Gastrocnemius medialis (tissue), 4 donors: ENCODE measurements at regions of chr3 and their contacts with region 1.

Region 1: DNA sequence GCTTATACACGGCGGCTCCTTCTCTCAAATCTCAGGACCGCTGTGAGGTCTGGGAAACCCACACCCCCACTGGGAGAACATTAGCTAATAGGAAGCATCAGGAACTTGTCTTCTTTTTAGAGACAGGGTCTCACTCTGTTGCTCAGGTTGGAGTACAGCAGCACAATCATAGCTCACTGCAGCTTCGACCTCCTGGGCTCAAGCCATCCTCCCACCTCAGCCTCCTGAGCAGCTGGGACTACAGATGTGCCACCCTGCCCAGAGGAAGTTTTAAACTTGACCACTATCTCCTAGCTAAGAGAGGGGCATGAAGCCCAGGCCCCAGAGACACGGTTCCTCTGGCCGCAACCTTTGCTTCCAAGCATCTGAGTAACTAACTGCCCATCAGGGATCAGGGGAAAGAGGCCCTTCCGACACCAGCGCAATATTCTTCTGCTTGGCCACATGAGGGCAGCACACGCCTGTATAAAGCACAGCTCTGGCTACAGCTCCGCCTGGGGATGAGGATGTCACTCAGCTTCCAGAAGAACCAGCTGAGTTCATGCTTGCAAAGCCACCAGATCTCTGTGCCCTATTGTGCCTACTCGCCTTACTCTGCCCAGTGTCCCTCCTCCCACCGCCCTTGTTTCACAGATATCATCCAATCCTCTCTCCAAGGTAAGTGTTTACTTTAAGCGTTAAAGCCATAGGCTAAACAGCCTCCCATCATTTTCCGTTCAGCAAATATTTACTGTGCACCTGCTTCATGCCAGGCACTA is 57.5 kb upstream of the SLC6A11 start:
- DNase-seq: no peak
- ATAC-seq: peak; percentile 79 to 89
- H3K4me3 ChIP-seq: no peak overlapping the region
- H3K27ac ChIP-seq: no peak overlapping the region
- H3K4me1 ChIP-seq: no peaks in the 10 kb centered on the region
- H3K27me3 ChIP-seq: peaks cover 4 to 6% (median 5%) of the 10 kb centered on the region in 3 donors
- CTCF ChIP-seq: peak; percentile 32 to 67 (median 53)
- POLR2A ChIP-seq: no peak

Region 2: DNA sequence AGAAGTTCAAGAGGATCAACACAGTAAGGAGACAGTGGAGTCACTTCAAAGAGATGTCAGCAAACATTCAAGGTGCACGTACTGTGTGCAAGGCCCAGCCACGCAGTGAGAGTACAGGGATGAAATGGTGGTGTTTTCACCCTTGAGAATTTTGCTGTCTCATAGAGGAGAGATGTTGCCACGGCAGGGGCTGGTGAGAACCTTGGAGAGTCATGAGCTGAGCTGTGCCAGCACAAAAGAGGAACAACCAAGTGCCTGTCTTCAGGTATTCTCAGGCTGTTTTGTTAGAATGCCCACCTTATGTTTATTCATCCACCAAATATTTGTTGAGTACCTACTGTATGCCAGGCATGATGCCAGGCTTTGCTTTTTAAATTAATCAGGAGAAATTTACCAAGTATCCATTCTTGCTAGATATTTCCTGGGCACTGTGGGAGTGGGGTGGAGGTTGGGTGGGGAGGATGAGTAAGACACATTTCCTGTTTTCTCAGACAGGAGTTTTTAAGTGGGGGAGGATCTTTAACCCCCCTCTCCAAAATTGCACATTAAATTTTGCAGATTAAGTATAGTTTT is 130.1 kb after region 1 on chr3:
- in situ Hi-C with region 1: loop called in 1 of 4 experiments (anchors 5 kb)
- intact Hi-C with region 1: no loop called
- DNase-seq: no peak
- ATAC-seq: no peak
- H3K4me3 ChIP-seq: no peak overlapping the region
- H3K27ac ChIP-seq: no peak overlapping the region
- H3K4me1 ChIP-seq: no peaks in the 10 kb centered on the region
- H3K27me3 ChIP-seq: no peaks in the 10 kb centered on the region
- CTCF ChIP-seq: no peak
- POLR2A ChIP-seq: no peak

Region 3: DNA sequence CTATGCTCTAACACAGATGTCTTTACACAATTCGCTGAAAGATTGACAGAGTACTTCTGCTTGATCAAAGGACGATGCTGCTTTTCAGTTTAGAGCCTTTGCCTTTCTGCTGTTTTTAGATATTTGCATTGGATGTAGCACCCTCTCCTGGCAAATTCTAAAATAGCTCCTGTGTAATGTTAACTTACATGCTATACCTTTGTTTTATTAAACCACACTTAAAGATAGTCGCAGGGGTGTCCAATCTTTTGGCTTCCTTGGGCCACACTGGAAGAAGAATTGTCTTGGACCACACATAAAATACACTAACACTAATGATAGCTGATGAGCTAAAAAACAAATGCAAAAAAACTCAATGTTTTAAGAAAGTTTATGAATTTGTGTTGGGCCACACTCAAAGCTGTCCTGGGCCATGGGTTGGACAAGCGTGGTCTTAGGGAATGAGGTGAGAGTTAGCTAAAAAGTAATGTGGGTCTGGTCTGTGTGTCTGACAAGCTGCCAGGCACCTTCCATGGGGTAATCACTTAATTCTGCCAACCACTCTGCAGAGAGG is 576.6 kb after region 1 on chr3:
- in situ Hi-C with region 1: loop called in 2 of 4 experiments (anchors 25 kb)
- intact Hi-C with region 1: no loop called
- DNase-seq: no peak
- ATAC-seq: peak; percentile 47 to 77
- H3K4me3 ChIP-seq: no peak overlapping the region
- H3K27ac ChIP-seq: no peak overlapping the region
- H3K4me1 ChIP-seq: no peaks in the 10 kb centered on the region
- H3K27me3 ChIP-seq: no peaks in the 10 kb centered on the region
- CTCF ChIP-seq: peak; percentile 38 to 66 (median 56)
- POLR2A ChIP-seq: no peak